ENCODE measurements at regions of chr21 and their contacts with region 1.

Region 1: DNA sequence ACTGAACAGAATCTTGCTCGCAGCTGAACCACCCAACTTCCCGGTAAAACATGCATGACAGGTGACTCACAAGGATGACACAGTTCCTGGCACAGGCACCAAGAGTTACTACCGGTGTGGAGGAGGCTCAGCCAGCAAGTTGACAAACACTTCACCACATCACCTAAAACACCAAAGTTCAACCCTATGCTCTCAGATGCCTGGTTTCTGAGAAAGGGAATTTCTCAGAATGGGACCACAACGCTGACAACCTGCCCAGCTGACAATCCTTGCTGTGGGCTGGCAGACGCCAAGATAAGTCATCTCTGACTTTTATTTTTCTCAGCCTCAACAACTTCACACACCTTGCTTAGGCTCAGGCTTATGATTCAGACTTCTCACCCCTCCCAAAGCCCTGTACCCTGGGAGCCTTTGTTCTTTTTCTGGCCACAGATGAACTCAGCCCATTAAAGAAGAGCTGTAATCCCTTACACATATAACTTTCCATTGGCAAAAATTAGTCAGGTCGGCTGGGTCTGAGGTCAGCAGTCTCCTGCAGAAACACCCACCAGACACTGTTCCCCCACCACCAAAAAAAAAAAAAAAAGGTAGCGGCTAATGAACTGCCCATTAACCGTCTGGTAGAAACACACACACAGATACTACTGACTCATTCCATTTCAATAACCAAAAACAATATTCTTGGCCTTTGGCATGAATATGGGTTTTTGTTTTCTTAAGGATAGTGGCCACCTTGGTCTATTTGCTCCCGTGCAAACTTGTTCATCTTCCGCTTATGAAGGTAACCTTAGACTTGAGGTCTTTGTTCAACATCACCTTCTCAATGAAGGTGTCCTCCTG is 10.8 kb upstream of the TIAM1 start:
- DNase-seq: peak; percentile 17 to 85 (median 76)
- ATAC-seq: peak; percentile 92
- H3K4me3 ChIP-seq: no peak overlapping the region
- H3K4me3 Mint-ChIP-seq: peak overlapping the region; percentile 4 to 74 (median 60)
- H3K27ac ChIP-seq: peak overlapping the region; percentile 46
- H3K27ac Mint-ChIP-seq: peak overlapping the region; percentile 48 to 95 (median 70)
- H3K4me1 ChIP-seq: peaks cover 8 to 28% of the 10 kb centered on the region in 2 donors
- H3K4me1 Mint-ChIP-seq: peaks cover 11 to 52% (median 43%) of the 10 kb centered on the region in 7 donors
- H3K27me3 ChIP-seq: no peaks in the 10 kb centered on the region
- H3K27me3 Mint-ChIP-seq: no peaks in the 10 kb centered on the region

Region 2: DNA sequence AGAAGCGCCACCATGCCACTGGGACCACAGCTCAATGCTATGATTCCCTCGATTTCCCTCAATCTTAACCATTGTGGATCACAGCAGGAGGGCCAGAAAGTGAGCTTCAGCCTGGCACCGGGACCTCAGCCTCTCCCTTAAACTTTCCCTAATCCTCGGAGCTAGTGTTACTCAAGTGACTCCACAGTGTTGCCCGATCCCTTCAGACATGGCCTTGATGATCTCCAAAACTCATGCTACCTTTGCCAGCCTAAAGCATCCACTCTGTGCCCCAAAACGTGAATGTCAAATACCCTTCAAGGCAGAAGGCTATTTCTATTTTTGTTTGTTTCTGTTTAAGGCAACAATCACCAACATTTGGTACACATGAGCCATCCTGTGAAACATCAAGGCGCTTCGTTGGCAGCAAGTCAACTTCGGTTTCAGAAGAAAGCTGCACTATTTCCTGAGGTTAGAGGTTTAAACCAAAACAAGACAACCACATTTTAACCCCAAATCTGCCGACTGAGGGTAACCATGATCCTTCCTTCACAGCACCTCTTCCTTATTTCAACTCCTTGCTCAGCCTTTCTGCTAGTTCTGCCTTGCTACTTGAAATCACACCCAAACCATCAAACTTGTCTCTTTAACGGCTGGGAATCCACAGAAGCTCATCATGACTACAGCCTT is 222.1 kb before region 1 on chr21:
- CTCF ChIA-PET with region 1: no interaction called
- POLR2A ChIA-PET with region 1: no interaction called
- intact Hi-C with region 1: loop called in 1 of 2 experiments (anchors 1 kb)
- DNase-seq: peak in 8 of 9 donors; percentile 58 to 94 (median 92)
- ATAC-seq: peak; percentile 96
- H3K4me3 ChIP-seq: peak overlapping the region; percentile 59
- H3K4me3 Mint-ChIP-seq: peak overlapping the region; percentile 83 to 91 (median 86)
- H3K27ac ChIP-seq: no peak overlapping the region
- H3K27ac Mint-ChIP-seq: peak overlapping the region; percentile 84 to 96 (median 94)
- H3K4me1 ChIP-seq: peaks cover 25 to 50% of the 10 kb centered on the region in 2 donors
- H3K4me1 Mint-ChIP-seq: peaks cover 41 to 75% (median 69%) of the 10 kb centered on the region in 7 donors
- H3K27me3 ChIP-seq: no peaks in the 10 kb centered on the region
- H3K27me3 Mint-ChIP-seq: no peaks in the 10 kb centered on the region

Region 3: DNA sequence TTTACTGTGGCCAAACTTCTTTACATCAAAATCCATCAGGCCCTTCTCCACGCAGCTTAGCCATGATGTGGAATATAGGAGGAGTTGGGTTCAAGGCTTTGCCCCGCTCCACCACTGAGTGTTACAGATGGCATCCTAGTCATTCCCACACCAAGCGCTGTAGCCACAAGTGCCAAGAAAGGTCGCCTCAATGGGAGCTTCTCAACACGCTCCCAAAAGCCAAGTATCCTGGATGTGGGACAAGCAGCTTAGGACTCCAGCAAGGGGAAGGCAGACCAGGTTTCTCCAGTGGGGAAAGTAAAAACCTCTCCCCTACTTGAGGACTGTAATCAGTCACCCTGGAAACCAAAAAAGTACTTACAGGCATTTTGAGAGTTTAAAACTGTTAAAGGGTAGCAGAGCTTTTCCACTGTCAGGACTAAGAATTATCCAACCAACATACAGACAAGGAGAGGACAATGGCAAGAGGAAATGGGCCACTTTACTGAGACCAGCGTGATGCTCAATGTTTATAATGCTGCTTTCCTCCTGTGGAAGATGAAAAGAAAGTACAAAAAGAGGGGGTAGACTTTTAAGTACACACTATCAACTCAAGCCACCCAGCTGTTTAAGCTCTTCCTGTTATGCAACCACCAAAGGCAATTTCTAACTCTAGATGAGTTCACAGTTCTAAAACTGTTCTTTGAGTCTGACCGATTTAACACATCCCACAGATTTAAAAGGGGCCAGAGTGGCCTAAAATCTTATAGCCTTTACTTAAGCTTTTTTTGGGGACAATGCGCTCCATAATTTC is 195.8 kb before region 1 on chr21:
- CTCF ChIA-PET with region 1: no interaction called
- POLR2A ChIA-PET with region 1: no interaction called
- intact Hi-C with region 1: no loop called
- DNase-seq: peak in 7 of 9 donors; percentile 52 to 74 (median 69)
- ATAC-seq: peak; percentile 90
- H3K4me3 ChIP-seq: peak overlapping the region; percentile 28
- H3K4me3 Mint-ChIP-seq: peak overlapping the region; percentile 70 to 88 (median 78)
- H3K27ac ChIP-seq: peak overlapping the region; percentile 69
- H3K27ac Mint-ChIP-seq: peak overlapping the region; percentile 83 to 99 (median 95)
- H3K4me1 ChIP-seq: peaks cover 0 to 75% of the 10 kb centered on the region in 2 donors
- H3K4me1 Mint-ChIP-seq: peaks cover 49 to 94% (median 89%) of the 10 kb centered on the region in 7 donors
- H3K27me3 ChIP-seq: no peaks in the 10 kb centered on the region
- H3K27me3 Mint-ChIP-seq: no peaks in the 10 kb centered on the region

Region 4: DNA sequence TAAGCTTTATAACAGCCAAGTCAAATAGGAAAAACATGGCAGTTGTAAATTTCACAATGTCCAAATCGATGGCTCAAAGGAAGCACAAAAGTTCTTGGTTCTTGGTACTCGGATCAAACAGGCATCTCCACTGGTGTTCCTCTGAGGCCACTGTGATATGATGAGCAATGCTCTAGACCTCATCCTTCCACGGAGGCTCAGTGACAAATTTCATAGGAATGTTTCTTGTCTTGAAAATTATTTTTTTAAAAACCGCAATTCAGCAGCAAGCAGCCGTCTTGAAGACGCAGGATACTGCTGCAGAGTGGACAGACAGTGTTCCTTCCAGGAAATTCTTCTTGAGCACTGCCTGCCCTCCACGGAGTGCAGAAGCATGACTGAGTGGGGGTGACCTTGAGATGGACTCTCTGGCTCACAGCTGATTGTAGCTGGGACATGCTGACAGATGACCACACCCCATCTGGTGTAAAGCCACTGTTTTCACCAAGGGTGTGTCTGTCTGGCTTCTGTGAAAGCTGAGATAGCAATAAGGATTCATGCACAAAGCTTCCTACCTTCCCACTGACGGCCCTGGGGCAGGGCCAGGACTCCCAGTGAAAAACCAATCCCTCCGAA is 72.6 kb before region 1 on chr21:
- CTCF ChIA-PET with region 1: interaction called, 4 read pairs
- POLR2A ChIA-PET with region 1: interaction called, 7 read pairs
- intact Hi-C with region 1: loop called in 1 of 2 experiments (anchors 5 kb)
- DNase-seq: no peak
- ATAC-seq: no peak
- H3K4me3 ChIP-seq: no peak overlapping the region
- H3K4me3 Mint-ChIP-seq: peak overlapping the region in 4 of 10 donors; percentile 20 to 51 (median 43)
- H3K27ac ChIP-seq: no peak overlapping the region
- H3K27ac Mint-ChIP-seq: peak overlapping the region in 7 of 9 donors; percentile 4 to 75 (median 30)
- H3K4me1 ChIP-seq: peaks cover 0 to 13% of the 10 kb centered on the region in 2 donors
- H3K4me1 Mint-ChIP-seq: peaks cover 14 to 36% (median 27%) of the 10 kb centered on the region in 7 donors
- H3K27me3 ChIP-seq: no peaks in the 10 kb centered on the region
- H3K27me3 Mint-ChIP-seq: no peaks in the 10 kb centered on the region

Region 5: GRCh38 chr21:31293986-31294385 is 60.8 kb before region 1 on chr21:
- CTCF ChIA-PET with region 1: no interaction called
- POLR2A ChIA-PET with region 1: no interaction called
- intact Hi-C with region 1: no loop called
- DNase-seq: peak in 1 of 9 donors; percentile 66
- ATAC-seq: no peak
- H3K4me3 ChIP-seq: no peak overlapping the region
- H3K4me3 Mint-ChIP-seq: no peak overlapping the region
- H3K27ac ChIP-seq: no peak overlapping the region
- H3K27ac Mint-ChIP-seq: no peak overlapping the region
- H3K4me1 ChIP-seq: no peaks in the 10 kb centered on the region
- H3K4me1 Mint-ChIP-seq: peaks cover 0 to 22% (median 0%) of the 10 kb centered on the region in 7 donors
- H3K27me3 ChIP-seq: no peaks in the 10 kb centered on the region
- H3K27me3 Mint-ChIP-seq: no peaks in the 10 kb centered on the region

Region 6: GRCh38 chr21:31335957-31336738 is 18.7 kb before region 1 on chr21:
- CTCF ChIA-PET with region 1: no interaction called
- POLR2A ChIA-PET with region 1: no interaction called
- intact Hi-C with region 1: no loop called
- DNase-seq: peak in 1 of 9 donors; percentile 36
- ATAC-seq: no peak
- H3K4me3 ChIP-seq: no peak overlapping the region
- H3K4me3 Mint-ChIP-seq: no peak overlapping the region
- H3K27ac ChIP-seq: no peak overlapping the region
- H3K27ac Mint-ChIP-seq: peak overlapping the region in 1 of 9 donors; percentile 16
- H3K4me1 ChIP-seq: no peaks in the 10 kb centered on the region
- H3K4me1 Mint-ChIP-seq: peaks cover 0 to 60% (median 11%) of the 10 kb centered on the region in 7 donors
- H3K27me3 ChIP-seq: no peaks in the 10 kb centered on the region
- H3K27me3 Mint-ChIP-seq: peaks cover 2 to 12% (median 9%) of the 10 kb centered on the region in 5 donors

Region 7: GRCh38 chr21:31397515-31397926 is 42.7 kb after region 1 on chr21:
- CTCF ChIA-PET with region 1: no interaction called
- POLR2A ChIA-PET with region 1: interaction called, 3 read pairs
- intact Hi-C with region 1: loop called (anchors 1 to 5 kb)
- DNase-seq: no peak
- ATAC-seq: no peak
- H3K4me3 ChIP-seq: no peak overlapping the region
- H3K4me3 Mint-ChIP-seq: peak overlapping the region; percentile 40 to 84 (median 72)
- H3K27ac ChIP-seq: no peak overlapping the region
- H3K27ac Mint-ChIP-seq: peak overlapping the region; percentile 5 to 91 (median 61)
- H3K4me1 ChIP-seq: peaks cover 12 to 41% of the 10 kb centered on the region in 2 donors
- H3K4me1 Mint-ChIP-seq: peaks cover 20 to 77% (median 58%) of the 10 kb centered on the region in 7 donors
- H3K27me3 ChIP-seq: no peaks in the 10 kb centered on the region
- H3K27me3 Mint-ChIP-seq: no peaks in the 10 kb centered on the region

Region 8: DNA sequence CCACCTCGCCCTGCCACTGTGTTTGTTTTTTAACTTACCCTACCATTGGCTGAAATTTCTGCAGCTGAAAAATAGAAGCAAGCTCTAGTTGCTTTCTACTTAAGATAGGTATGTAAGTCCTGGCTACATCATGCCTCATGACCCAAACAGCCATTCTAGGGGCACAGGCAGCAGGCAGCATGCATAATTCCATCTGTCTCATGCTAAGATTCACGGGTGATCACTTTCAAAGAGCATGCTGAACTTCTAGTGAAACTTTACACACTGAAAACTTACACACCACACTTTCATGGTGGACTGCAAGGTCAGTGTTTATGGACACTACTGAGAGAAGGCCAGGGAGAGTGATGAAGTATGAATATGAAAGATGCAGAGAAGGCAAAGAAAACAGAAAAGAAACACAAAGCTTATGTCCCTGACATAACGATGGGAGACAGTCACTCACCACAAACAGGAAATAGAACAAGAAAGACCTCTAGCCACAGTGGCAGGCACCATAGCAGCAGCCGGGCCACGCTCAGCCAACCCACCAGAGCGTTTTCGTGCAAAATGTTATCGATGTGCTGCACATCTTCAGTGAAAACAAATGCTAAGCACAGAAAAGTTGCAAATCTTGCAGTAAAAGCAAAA is 91.5 kb after region 1 on chr21:
- CTCF ChIA-PET with region 1: no interaction called
- POLR2A ChIA-PET with region 1: no interaction called
- intact Hi-C with region 1: loop called in 1 of 2 experiments (anchors 5 kb)
- DNase-seq: peak in 7 of 9 donors; percentile 12 to 66 (median 55)
- ATAC-seq: peak; percentile 86
- H3K4me3 ChIP-seq: peak overlapping the region; percentile 38
- H3K4me3 Mint-ChIP-seq: peak overlapping the region; percentile 38 to 86 (median 74)
- H3K27ac ChIP-seq: no peak overlapping the region
- H3K27ac Mint-ChIP-seq: peak overlapping the region; percentile 4 to 92 (median 33)
- H3K4me1 ChIP-seq: peaks cover 14 to 22% of the 10 kb centered on the region in 2 donors
- H3K4me1 Mint-ChIP-seq: peaks cover 26 to 58% (median 41%) of the 10 kb centered on the region in 7 donors
- H3K27me3 ChIP-seq: no peaks in the 10 kb centered on the region
- H3K27me3 Mint-ChIP-seq: peaks cover 0 to 7% (median 0%) of the 10 kb centered on the region in 5 donors

Region 9: GRCh38 chr21:31659536-31660258 is 304.9 kb after region 1 on chr21 and contains the start of gene SOD1:
- CTCF ChIA-PET with region 1: no interaction called
- POLR2A ChIA-PET with region 1: no interaction called
- intact Hi-C with region 1: loop called in 1 of 2 experiments (anchors 5 kb)
- DNase-seq: peak in 8 of 9 donors; percentile 20 to 98 (median 97)
- ATAC-seq: peak; percentile 97
- H3K4me3 ChIP-seq: peak within 1 kb of the TSS; percentile 79
- H3K4me3 Mint-ChIP-seq: peak within 1 kb of the TSS; percentile 95 to 100 (median 100)
- H3K27ac ChIP-seq: peak within 1 kb of the TSS; percentile 88
- H3K27ac Mint-ChIP-seq: peak within 1 kb of the TSS; percentile 97 to 100 (median 98)
- H3K4me1 ChIP-seq: peaks cover 15 to 50% of the 10 kb centered on the region in 2 donors
- H3K4me1 Mint-ChIP-seq: peaks cover 40 to 80% (median 68%) of the 10 kb centered on the region in 7 donors
- H3K27me3 ChIP-seq: no peaks in the 10 kb centered on the region
- H3K27me3 Mint-ChIP-seq: no peaks in the 10 kb centered on the region
- total RNA-seq, gene SOD1: 110 to 218 (median 182) TPM

Region 10: DNA sequence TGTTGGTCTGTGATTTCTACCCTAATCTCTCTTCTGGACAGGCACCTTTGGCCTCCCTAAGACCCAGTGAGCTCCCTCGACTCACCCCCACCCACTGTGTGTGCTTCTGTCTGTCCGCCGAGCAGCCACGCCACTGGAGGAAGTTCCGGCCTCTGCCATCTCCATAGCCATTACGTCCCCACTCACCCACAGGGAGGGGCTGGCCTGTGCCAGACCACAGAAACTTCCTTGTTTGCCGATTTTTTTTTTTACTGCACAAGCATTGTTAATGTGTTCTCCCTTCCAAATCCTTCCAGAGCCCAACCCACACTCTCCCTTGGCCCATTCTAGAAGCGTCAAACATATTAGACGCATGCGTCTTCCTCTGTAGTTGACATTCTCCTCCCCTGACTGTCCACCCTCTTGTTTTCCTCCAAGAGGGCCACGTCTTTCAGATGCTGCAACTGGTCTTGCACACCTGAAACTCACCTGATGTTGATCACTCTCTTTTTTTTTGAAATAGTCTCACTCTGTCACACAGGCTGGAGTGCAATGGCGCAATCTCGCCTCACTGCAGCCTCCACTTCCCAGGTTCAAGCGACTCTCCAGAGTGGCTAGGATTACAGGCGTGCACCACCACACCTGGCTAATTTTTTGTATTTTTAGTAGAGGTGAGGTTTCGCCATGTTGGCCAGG is 1130.0 kb after region 1 on chr21:
- CTCF ChIA-PET with region 1: no interaction called
- POLR2A ChIA-PET with region 1: no interaction called
- intact Hi-C with region 1: no loop called
- DNase-seq: no peak
- ATAC-seq: peak; percentile 65
- H3K4me3 ChIP-seq: no peak overlapping the region
- H3K4me3 Mint-ChIP-seq: peak overlapping the region in 1 of 10 donors; percentile 37
- H3K27ac ChIP-seq: no peak overlapping the region
- H3K27ac Mint-ChIP-seq: peak overlapping the region in 1 of 9 donors; percentile 76
- H3K4me1 ChIP-seq: no peaks in the 10 kb centered on the region
- H3K4me1 Mint-ChIP-seq: peaks cover 0 to 9% (median 0%) of the 10 kb centered on the region in 7 donors
- H3K27me3 ChIP-seq: no peaks in the 10 kb centered on the region
- H3K27me3 Mint-ChIP-seq: no peaks in the 10 kb centered on the region

Measured in naive thymus-derived CD4-positive, alpha-beta T cell (primary cell).